ENCODE measurements at regions of chr4 and their contacts with region 1.

Region 1: GRCh38 chr4:52983563-52984303 is 121.6 kb downstream of the RASL11B start:
- DNase-seq: peak; percentile 49
- H3K4me3 ChIP-seq: no peak overlapping the region
- H3K27ac ChIP-seq: no peak overlapping the region
- H3K4me1 ChIP-seq: no peaks in the 10 kb centered on the region
- H3K27me3 ChIP-seq: no peaks in the 10 kb centered on the region
- CTCF ChIP-seq: peak; percentile 56

Region 2: GRCh38 chr4:52106660-52107059 is 877.1 kb before region 1 on chr4:
- CTCF ChIA-PET with region 1: no interaction called
- POLR2A ChIA-PET with region 1: no interaction called
- intact Hi-C with region 1: loop called (anchors 5 kb)
- DNase-seq: peak; percentile 60
- H3K4me3 ChIP-seq: no peak overlapping the region
- H3K27ac ChIP-seq: peak overlapping the region; percentile 45
- H3K4me1 ChIP-seq: peaks cover 18% of the 10 kb centered on the region
- H3K27me3 ChIP-seq: no peaks in the 10 kb centered on the region
- CTCF ChIP-seq: no peak

Region 3: DNA sequence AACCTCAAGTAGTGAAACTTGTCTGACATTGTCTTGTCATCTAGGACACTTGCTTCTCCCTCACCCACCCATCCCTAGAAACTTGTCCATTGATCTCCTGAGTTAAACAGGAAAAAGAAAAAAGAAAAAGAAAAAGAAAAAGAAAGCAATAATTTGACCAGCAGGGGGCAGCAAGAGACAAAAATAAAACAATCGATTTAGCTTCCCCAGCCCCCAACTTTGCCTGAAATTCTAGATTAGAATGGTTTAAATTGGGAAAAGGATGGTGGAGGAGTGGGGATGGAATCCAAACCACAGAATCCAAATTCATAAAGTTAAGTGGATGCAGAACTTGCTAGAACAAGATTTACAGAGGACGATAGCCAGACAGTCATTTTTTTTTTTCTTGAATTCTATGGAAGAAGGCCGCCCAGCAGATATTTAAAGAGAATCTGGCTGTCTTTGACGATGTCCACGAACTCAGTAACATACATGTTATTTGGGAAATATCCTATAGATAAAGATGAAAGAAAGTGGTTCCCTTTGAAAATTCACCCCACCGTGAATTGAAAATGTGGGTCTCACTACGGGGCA is 607.5 kb before region 1 on chr4:
- CTCF ChIA-PET with region 1: interaction called, 7 read pairs
- POLR2A ChIA-PET with region 1: no interaction called
- intact Hi-C with region 1: loop called (anchors 1 kb)
- DNase-seq: peak; percentile 50
- H3K4me3 ChIP-seq: no peak overlapping the region
- H3K27ac ChIP-seq: no peak overlapping the region
- H3K4me1 ChIP-seq: no peaks in the 10 kb centered on the region
- H3K27me3 ChIP-seq: no peaks in the 10 kb centered on the region
- CTCF ChIP-seq: peak; percentile 55

Region 4: DNA sequence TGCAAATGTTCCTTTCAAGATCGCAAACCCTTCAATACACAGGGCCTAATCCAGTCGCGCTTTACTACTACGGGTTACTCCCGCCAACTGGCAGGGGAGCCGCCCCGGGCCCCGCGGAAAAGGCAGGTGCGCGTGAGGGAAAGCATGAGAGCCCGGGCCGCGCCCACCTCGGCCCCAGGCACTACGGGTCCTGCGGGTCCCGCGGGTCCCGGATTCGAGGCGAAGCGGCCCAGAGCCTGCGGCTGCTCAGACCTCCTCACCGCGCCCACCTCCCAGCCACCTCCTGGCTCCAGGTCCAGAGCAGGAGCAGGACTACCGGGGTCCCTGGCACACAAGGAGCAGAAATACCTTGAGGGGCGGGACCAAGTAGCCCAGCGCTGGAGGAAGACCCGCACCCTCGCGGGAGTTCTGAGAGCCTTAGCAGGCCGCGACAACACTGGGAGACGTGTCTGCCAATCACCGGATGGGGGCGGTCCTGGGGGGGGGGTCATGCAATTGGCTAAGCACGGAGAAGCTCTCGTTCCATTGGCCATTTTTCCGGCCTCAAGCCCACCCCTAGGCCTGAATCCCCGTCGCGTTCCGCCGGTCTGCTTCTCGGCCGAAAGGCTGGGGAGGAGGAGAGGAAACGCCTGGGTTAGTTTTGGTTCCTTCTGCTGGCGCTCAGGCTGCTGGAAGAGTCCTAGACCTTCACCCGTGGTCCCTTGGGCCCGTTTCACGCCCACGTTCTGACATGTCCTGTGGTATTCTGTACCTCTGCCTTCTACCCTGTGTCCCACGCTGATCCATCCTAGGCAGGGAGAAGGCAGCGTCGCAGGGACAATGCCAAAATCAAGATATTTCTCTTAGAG is 261.5 kb before region 1 on chr4:
- CTCF ChIA-PET with region 1: no interaction called
- POLR2A ChIA-PET with region 1: no interaction called
- intact Hi-C with region 1: loop called (anchors 5 kb)
- DNase-seq: peak; percentile 94
- H3K4me3 ChIP-seq: peak overlapping the region; percentile 59
- H3K27ac ChIP-seq: peak overlapping the region; percentile 68
- H3K4me1 ChIP-seq: no peaks in the 10 kb centered on the region
- H3K27me3 ChIP-seq: no peaks in the 10 kb centered on the region
- CTCF ChIP-seq: no peak

Region 5: DNA sequence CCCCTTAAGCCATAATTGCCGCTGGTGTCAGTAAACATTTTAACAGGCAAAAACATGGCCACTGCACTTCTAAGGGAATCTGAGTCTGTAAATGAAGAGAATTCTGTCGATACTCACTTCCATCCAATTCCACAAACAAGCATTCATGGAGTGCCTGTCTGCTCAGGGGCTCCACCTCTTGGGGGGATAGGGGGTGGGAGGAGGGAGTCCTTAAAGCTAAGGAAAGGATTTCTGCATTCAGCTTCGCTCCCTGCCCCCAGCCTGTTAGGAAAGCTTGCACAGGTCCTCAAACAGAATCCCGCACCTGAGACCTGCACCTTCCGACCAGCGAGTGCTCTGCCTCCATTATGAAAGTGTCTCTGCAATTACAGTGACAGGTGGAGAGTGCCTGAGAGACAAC is 1543.8 kb after region 1 on chr4:
- CTCF ChIA-PET with region 1: no interaction called
- POLR2A ChIA-PET with region 1: interaction called, 10 read pairs
- intact Hi-C with region 1: no loop called
- DNase-seq: no peak
- H3K4me3 ChIP-seq: no peak overlapping the region
- H3K27ac ChIP-seq: no peak overlapping the region
- H3K4me1 ChIP-seq: no peaks in the 10 kb centered on the region
- H3K27me3 ChIP-seq: no peaks in the 10 kb centered on the region
- CTCF ChIP-seq: no peak

Measured in A673 (cell line).